Activated CD8-positive, alpha-beta T cell treated with anti-CD3 and anti-CD28 coated beads for 36 hours (primary cell): ENCODE measurements at regions of chr1 and their contacts with region 1.

Region 1: DNA sequence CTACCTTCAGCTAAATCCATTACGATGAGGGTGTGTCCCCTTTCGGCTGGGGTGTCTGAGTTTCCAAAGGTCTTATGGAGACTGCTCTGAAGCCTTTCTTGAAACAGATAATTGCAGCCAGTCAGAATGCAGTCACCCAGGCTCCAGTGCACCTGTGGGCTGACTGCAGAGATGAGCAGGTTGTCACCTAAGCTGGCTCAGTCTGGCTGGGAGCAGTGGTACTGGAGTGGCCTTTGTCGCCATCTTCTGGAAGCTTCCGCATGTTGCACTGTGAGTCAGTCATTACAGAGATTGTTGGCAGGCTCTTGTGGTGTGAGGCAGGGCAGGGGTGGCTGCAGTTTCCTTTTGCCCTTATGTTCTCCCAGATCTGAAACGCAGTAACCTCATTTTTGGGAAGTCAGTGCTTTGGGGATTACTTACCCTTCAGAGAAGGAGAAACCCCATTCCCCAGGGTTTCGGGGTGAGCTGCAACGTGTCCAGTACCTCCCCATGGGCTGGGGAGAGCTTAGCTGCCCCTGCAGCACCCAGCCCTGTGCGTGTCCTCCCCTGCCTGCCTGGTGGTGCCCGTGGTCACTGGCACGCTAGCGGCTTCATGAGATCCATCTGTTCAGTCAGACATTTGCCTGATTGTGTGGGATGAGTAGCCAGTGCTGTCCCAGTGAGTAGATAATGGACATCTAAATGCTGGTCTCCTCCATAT is 48.0 kb downstream of the SMYD2 start:
- DNase-seq: peak; percentile 87
- ATAC-seq: peak; percentile 95
- H3K4me3 Mint-ChIP-seq: no peak overlapping the region
- H3K27ac Mint-ChIP-seq: no peak overlapping the region
- H3K4me1 Mint-ChIP-seq: peaks cover 2% of the 10 kb centered on the region
- H3K27me3 Mint-ChIP-seq: no peaks in the 10 kb centered on the region
- CTCF ChIP-seq: peak; percentile 85

Region 2: GRCh38 chr1:213891989-213892902 is 436.7 kb before region 1 on chr1:
- CTCF ChIA-PET with region 1: no interaction called
- POLR2A ChIA-PET with region 1: no interaction called
- intact Hi-C with region 1: no loop called
- DNase-seq: no peak
- ATAC-seq: no peak
- H3K4me3 Mint-ChIP-seq: no peak overlapping the region
- H3K27ac Mint-ChIP-seq: no peak overlapping the region
- H3K4me1 Mint-ChIP-seq: no peaks in the 10 kb centered on the region
- H3K27me3 Mint-ChIP-seq: peaks cover 3% of the 10 kb centered on the region
- CTCF ChIP-seq: no peak

Region 3: DNA sequence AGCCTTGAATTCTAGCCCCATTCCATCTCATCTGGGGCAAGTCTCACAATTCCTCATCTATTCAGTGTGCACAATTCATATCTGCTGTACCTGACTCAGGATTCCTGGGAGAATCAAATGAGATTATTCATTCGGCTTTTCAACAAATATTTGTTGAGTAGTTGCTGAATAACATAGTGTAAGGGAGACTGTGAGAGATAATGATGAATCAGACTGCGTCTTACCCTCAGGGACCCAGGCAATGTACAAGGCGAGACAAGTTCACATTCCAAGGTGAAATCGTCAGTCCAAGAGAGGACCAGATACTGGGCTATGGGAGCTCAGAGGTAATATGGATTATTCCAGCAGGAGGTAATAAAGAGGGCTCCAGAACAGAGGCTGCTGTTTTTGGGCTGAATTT is 115.8 kb before region 1 on chr1:
- CTCF ChIA-PET with region 1: interaction called, 73 read pairs
- POLR2A ChIA-PET with region 1: no interaction called
- intact Hi-C with region 1: loop called (anchors 5 kb)
- DNase-seq: no peak
- ATAC-seq: no peak
- H3K4me3 Mint-ChIP-seq: no peak overlapping the region
- H3K27ac Mint-ChIP-seq: no peak overlapping the region
- H3K4me1 Mint-ChIP-seq: peaks cover 2% of the 10 kb centered on the region
- H3K27me3 Mint-ChIP-seq: peaks cover 10% of the 10 kb centered on the region
- CTCF ChIP-seq: no peak

Region 4: GRCh38 chr1:214234635-214235025 is 94.3 kb before region 1 on chr1:
- CTCF ChIA-PET with region 1: interaction called, 12 read pairs
- POLR2A ChIA-PET with region 1: no interaction called
- intact Hi-C with region 1: no loop called
- DNase-seq: no peak
- ATAC-seq: no peak
- H3K4me3 Mint-ChIP-seq: no peak overlapping the region
- H3K27ac Mint-ChIP-seq: no peak overlapping the region
- H3K4me1 Mint-ChIP-seq: no peaks in the 10 kb centered on the region
- H3K27me3 Mint-ChIP-seq: peaks cover 9% of the 10 kb centered on the region
- CTCF ChIP-seq: no peak

Region 5: DNA sequence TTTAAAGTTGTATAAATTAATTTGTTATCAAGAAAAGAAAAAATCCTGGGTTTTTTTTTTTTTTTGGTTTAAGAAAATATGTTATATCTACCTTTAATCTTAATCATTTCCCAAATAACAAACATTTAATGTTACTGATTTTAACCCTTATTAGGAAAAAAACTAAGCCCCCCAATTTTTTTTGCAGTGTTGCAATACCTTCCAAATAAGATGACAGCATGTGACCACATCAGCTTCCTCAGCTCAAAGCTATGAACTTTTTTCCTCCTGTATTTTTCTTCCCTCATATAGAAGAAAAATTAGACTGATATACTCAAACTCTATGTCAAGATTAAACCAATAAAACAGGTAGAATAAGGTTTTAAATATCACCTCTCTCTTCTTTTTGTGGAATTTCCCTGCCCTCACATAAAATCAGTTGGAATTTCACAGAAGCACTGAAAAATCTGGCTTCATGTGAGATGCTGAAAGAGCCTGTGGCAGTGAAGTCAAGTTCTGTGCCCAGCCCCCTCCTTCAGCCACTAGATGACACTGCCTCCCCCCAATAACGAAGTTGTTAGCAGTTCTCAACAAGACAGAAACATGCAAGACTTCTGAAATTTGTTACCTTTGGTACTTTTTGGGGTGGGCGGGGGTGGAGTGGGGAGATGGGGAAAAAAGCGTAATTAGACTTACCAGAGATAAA is 57.6 kb before region 1 on chr1:
- CTCF ChIA-PET with region 1: interaction called, 56 read pairs
- POLR2A ChIA-PET with region 1: interaction called, 3 read pairs
- intact Hi-C with region 1: no loop called
- DNase-seq: peak; percentile 33
- ATAC-seq: no peak
- H3K4me3 Mint-ChIP-seq: no peak overlapping the region
- H3K27ac Mint-ChIP-seq: no peak overlapping the region
- H3K4me1 Mint-ChIP-seq: peaks cover 2% of the 10 kb centered on the region
- H3K27me3 Mint-ChIP-seq: peaks cover 8% of the 10 kb centered on the region
- CTCF ChIP-seq: no peak

Region 6: DNA sequence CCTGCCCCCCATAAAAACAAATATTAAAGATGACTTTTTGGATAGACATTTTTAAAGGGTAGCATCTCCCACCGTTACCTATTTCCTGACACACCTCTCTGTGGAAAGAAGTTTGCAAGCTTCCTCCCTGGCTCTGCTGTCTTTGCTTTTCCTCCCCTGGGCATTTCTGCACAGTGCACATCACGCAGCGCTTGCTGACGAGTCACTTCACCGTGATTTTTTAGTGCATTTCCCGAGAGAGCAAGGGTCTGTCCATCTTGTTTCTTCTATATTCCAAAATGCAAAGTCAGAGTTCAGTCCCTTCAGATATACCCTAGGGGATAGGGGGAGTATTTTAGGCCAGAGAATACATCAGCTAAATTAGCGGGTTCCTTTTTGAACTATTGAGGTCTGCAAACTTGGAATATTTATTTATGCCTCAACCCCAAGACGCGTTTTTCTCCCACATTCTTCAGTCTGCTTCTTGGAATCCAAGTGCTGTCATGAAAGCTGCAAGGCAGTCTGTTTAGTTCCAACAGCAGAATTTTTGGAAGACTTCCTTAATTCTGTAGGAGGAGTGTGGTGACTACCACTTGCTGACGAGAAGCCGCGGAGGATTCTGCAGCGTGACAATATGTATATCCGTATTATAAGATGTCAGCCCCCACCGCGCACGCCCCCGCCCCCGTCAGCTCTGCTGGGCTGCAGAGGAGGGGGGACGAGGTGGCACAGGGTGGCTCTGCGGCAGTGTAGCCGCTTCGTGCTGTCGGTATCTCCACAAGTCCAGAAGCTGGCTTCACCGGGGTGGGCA is 25.6 kb before region 1 on chr1:
- CTCF ChIA-PET with region 1: interaction called, 14 read pairs
- POLR2A ChIA-PET with region 1: no interaction called
- intact Hi-C with region 1: no loop called
- DNase-seq: no peak
- ATAC-seq: no peak
- H3K4me3 Mint-ChIP-seq: no peak overlapping the region
- H3K27ac Mint-ChIP-seq: no peak overlapping the region
- H3K4me1 Mint-ChIP-seq: peaks cover 18% of the 10 kb centered on the region
- H3K27me3 Mint-ChIP-seq: no peaks in the 10 kb centered on the region
- CTCF ChIP-seq: no peak

Region 7: DNA sequence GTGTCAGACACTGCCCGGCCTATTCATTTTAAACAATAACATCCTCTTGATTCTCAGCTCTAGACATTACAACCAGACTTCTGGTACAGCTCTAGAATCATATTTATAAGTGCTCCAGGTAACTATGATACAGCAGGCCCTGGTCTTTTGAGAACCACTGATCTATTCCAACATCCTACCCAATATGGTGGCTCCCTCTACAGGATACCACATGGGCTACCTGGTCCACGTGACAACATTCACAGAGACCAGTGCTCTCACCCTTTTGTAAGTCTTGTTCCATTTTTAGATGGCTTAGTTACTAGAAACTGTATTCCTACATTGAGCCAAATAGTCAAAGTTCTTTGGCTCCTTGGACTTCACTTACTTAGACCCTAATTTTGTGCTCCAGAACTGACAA is 119.6 kb after region 1 on chr1:
- CTCF ChIA-PET with region 1: interaction called, 10 read pairs
- POLR2A ChIA-PET with region 1: no interaction called
- intact Hi-C with region 1: no loop called
- DNase-seq: no peak
- ATAC-seq: no peak
- H3K4me3 Mint-ChIP-seq: no peak overlapping the region
- H3K27ac Mint-ChIP-seq: no peak overlapping the region
- H3K4me1 Mint-ChIP-seq: peaks cover 29% of the 10 kb centered on the region
- H3K27me3 Mint-ChIP-seq: peaks cover 4% of the 10 kb centered on the region
- CTCF ChIP-seq: no peak

Region 8: DNA sequence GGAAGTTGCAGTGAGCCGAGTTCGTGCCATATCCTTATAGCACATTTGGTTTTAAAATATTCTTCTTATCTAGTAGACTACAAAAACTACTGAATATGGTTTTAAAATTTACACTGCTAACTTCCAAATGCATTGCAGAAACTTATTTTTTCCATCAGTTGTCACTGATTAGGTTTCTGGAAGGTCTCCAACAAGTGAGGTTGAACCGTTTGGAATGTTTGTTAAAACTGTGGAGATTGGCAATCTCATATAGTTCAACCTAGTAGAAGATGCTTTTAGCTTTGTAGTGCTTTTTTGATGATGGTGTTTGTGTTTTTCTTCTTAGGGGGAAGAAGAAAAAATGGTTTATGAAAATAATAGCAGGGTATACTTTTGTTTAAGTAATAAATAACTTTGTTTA is 287.0 kb after region 1 on chr1:
- CTCF ChIA-PET with region 1: no interaction called
- POLR2A ChIA-PET with region 1: no interaction called
- intact Hi-C with region 1: no loop called
- DNase-seq: no peak
- ATAC-seq: no peak
- H3K4me3 Mint-ChIP-seq: no peak overlapping the region
- H3K27ac Mint-ChIP-seq: peak overlapping the region; percentile 38
- H3K4me1 Mint-ChIP-seq: peaks cover 11% of the 10 kb centered on the region
- H3K27me3 Mint-ChIP-seq: no peaks in the 10 kb centered on the region
- CTCF ChIP-seq: no peak